Activated CD8-positive, alpha-beta memory T cell treated with anti-CD3 and anti-CD28 coated beads, Interleukin-2, amount 10 ng/mL, durations not matched to agents 7 days and 5 days (primary cell): ENCODE measurements at regions of chr5 and their contacts with region 1.

Region 1: DNA sequence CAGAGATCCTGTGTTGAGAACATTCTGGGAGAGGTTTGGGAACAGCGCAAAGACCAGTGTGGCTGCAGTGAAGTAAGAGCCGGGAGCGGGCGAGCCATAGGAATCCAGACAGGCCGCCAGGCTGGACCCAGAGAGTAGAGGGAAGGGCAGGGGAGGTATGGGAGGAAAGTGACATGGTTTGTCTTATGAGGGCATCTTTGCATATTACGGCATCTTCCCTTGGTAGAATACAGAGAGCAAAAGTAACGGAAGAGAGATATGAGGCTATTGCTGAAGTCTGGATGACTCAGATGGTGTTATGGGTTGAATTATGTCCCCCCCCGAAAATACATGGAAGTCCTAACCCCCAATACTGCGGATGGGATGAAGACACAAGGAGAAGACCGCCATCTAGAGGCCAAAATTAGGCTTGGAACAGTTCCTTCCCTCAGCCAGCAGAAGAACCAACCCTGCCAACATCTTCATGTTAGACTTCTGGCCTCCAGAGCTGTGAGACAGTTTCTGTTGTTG is 268.2 kb downstream of the MAST4 start:
- DNase-seq: peak; percentile 65
- ATAC-seq: peak; percentile 86
- H3K4me3 Mint-ChIP-seq: no peak overlapping the region
- H3K27ac Mint-ChIP-seq: peak overlapping the region; percentile 6
- H3K4me1 Mint-ChIP-seq: peaks cover 31% of the 10 kb centered on the region
- H3K27me3 Mint-ChIP-seq: peaks cover 26% of the 10 kb centered on the region

Region 2: GRCh38 chr5:66802941-66803340 is 61.4 kb before region 1 on chr5:
- CTCF ChIA-PET with region 1: no interaction called
- DNase-seq: no peak
- ATAC-seq: no peak
- H3K4me3 Mint-ChIP-seq: no peak overlapping the region
- H3K27ac Mint-ChIP-seq: no peak overlapping the region
- H3K4me1 Mint-ChIP-seq: no peaks in the 10 kb centered on the region
- H3K27me3 Mint-ChIP-seq: peaks cover 72% of the 10 kb centered on the region

Region 3: GRCh38 chr5:66814146-66814991 is 50.0 kb before region 1 on chr5:
- CTCF ChIA-PET with region 1: interaction called, 48 read pairs
- DNase-seq: peak; percentile 76
- ATAC-seq: peak; percentile 85
- H3K4me3 Mint-ChIP-seq: no peak overlapping the region
- H3K27ac Mint-ChIP-seq: no peak overlapping the region
- H3K4me1 Mint-ChIP-seq: peaks cover 34% of the 10 kb centered on the region
- H3K27me3 Mint-ChIP-seq: peaks cover 5% of the 10 kb centered on the region